ENCODE measurements at regions of chr1 and their contacts with region 1.

Region 1: DNA sequence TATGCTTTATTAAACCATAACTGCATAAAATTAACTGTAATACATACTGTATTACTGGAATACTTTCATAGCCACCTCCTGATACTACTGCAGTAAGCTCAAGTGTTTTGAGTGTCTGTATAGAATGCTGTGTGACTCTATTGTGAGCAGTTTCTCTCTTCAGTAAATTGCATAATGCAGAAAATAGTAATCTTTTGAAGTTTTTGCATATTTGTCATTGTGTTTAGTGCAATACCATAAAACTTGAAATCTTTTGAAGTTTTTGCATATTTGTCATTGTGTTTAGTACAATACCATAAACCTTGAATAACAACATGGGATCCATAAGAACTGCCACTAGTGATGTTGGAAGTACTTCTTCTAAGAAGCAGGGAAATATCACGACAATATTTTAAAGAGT is 11.2 kb downstream of the TPR start:
- DNase-seq: no peak
- ATAC-seq: no peak
- H3K4me3 ChIP-seq: no peak overlapping the region
- H3K4me3 Mint-ChIP-seq: no peak overlapping the region
- H3K27ac ChIP-seq: no peak overlapping the region
- H3K27ac Mint-ChIP-seq: no peak overlapping the region
- H3K4me1 ChIP-seq: no peaks in the 10 kb centered on the region
- H3K4me1 Mint-ChIP-seq: peaks cover 13% of the 10 kb centered on the region
- H3K27me3 ChIP-seq: no peaks in the 10 kb centered on the region
- H3K27me3 Mint-ChIP-seq: no peaks in the 10 kb centered on the region
- CTCF ChIP-seq: no peak

Region 2: DNA sequence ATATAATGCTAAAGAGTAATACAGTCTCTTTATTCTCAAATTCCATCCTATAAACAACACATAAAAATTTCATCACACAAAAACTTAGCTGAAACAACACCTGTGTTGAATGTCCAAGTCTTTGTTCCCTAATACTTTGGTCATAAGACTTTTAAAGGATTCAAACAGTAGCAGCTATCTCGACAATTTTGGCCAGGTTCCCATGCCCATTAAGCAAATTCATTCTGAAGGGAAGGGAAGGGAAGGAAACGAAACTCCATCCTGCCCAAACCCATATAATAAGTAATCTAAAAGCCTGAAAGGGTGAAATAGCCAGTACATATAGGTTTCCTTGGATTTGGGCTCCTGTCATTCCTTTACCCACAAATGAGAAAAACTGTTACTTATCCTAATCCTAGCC is 1054.3 kb before region 1 on chr1:
- CTCF ChIA-PET with region 1: no interaction called
- POLR2A ChIA-PET with region 1: no interaction called
- intact Hi-C with region 1: loop called in 1 of 2 experiments (anchors 10 kb)
- DNase-seq: no peak
- ATAC-seq: no peak
- H3K4me3 ChIP-seq: no peak overlapping the region
- H3K4me3 Mint-ChIP-seq: no peak overlapping the region
- H3K27ac ChIP-seq: no peak overlapping the region
- H3K27ac Mint-ChIP-seq: no peak overlapping the region
- H3K4me1 ChIP-seq: peaks cover 29% of the 10 kb centered on the region
- H3K4me1 Mint-ChIP-seq: peaks cover 40% of the 10 kb centered on the region
- H3K27me3 ChIP-seq: no peaks in the 10 kb centered on the region
- H3K27me3 Mint-ChIP-seq: no peaks in the 10 kb centered on the region
- CTCF ChIP-seq: no peak

Region 3: DNA sequence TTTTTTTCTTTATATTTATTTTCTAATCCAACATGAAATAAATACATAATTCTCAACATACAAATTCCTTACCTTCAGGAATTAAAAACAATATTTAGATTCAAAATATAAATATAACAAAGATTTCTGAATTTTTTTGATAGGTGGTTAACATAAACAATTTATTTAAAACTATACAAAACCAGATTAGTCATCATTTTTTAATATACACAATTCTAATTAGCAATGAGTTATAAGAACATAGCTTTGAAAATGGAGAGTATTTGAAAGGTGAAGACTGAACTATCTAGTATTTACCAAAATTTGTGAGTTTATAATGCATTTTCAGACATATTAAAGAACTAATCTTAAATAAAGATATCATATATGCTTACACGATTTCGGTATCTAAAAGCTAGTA is 26.3 kb before region 1 on chr1:
- CTCF ChIA-PET with region 1: no interaction called
- POLR2A ChIA-PET with region 1: no interaction called
- intact Hi-C with region 1: loop called (anchors 2 to 5 kb)
- DNase-seq: no peak
- ATAC-seq: no peak
- H3K4me3 ChIP-seq: no peak overlapping the region
- H3K4me3 Mint-ChIP-seq: no peak overlapping the region
- H3K27ac ChIP-seq: no peak overlapping the region
- H3K27ac Mint-ChIP-seq: no peak overlapping the region
- H3K4me1 ChIP-seq: no peaks in the 10 kb centered on the region
- H3K4me1 Mint-ChIP-seq: no peaks in the 10 kb centered on the region
- H3K27me3 ChIP-seq: no peaks in the 10 kb centered on the region
- H3K27me3 Mint-ChIP-seq: no peaks in the 10 kb centered on the region
- CTCF ChIP-seq: no peak

Measured in CD8-positive, alpha-beta T cell (primary cell).